ENCODE measurements at regions of chr3 and their contacts with region 1.

Region 1: GRCh38 chr3:102673271-102674115 is 238.7 kb downstream of the ZPLD1 start:
- DNase-seq: peak; percentile 3 to 52 (median 37)
- ATAC-seq: peak; percentile 70
- H3K4me3 ChIP-seq: no peak overlapping the region
- H3K4me3 Mint-ChIP-seq: peak overlapping the region in 1 of 10 donors; percentile 26
- H3K27ac ChIP-seq: no peak overlapping the region
- H3K27ac Mint-ChIP-seq: no peak overlapping the region
- H3K4me1 ChIP-seq: no peaks in the 10 kb centered on the region
- H3K4me1 Mint-ChIP-seq: peaks cover 0 to 4% (median 0%) of the 10 kb centered on the region in 7 donors
- H3K27me3 ChIP-seq: peaks cover 0 to 4% of the 10 kb centered on the region in 2 donors
- H3K27me3 Mint-ChIP-seq: peaks cover 0 to 41% (median 27%) of the 10 kb centered on the region in 5 donors

Region 2: DNA sequence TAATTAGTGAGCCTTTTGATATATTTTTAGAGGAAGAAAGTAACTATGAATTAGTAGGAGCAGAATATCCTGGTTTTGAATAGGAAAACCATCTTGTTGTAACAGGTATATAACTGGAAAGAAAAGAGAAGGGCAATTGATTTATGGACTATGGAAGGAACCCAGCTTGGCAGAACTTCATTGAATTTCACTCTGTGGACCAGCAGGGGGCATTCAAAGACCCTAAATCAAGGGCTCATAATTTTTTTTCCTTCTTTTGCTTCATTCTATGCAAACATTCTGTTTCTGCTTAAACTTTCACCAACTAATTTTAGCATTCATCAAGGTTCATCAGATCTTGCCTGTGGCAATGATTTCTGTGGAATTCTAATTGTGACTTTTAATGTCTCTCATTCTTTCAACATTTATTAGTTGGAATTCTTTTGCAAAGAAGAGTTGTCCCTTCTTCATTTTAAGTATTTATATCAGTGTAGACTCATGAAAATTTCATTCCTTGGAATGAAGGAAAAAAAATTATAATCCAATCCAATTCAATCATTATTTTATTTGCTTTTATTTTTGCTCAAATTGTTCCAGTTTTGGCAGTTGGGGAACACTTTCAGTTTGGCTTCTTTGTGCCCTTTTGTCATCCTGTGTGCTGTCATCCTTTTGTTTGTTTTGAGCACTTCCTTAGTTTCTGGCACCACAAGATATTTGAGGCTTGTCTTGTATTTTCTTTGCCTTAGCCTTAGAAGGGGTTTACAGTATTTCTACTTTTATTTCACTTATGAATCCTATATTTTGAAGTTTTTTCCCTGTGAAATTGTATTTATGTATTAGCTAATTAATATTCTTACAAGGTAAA is 864.1 kb before region 1 on chr3:
- CTCF ChIA-PET with region 1: no interaction called
- POLR2A ChIA-PET with region 1: no interaction called
- intact Hi-C with region 1: loop called in 1 of 2 experiments (anchors 5 kb)
- DNase-seq: peak in 7 of 9 donors; percentile 31 to 67 (median 57)
- ATAC-seq: peak; percentile 88
- H3K4me3 ChIP-seq: no peak overlapping the region
- H3K4me3 Mint-ChIP-seq: peak overlapping the region in 8 of 10 donors; percentile 23 to 66 (median 60)
- H3K27ac ChIP-seq: peak overlapping the region; percentile 34
- H3K27ac Mint-ChIP-seq: peak overlapping the region; percentile 51 to 93 (median 87)
- H3K4me1 ChIP-seq: peaks cover 0 to 27% of the 10 kb centered on the region in 2 donors
- H3K4me1 Mint-ChIP-seq: peaks cover 11 to 62% (median 54%) of the 10 kb centered on the region in 7 donors
- H3K27me3 ChIP-seq: no peaks in the 10 kb centered on the region
- H3K27me3 Mint-ChIP-seq: no peaks in the 10 kb centered on the region

Region 3: GRCh38 chr3:102141096-102141927 is 532.2 kb before region 1 on chr3:
- CTCF ChIA-PET with region 1: no interaction called
- POLR2A ChIA-PET with region 1: no interaction called
- intact Hi-C with region 1: no loop called
- DNase-seq: no peak
- ATAC-seq: no peak
- H3K4me3 ChIP-seq: no peak overlapping the region
- H3K4me3 Mint-ChIP-seq: no peak overlapping the region
- H3K27ac ChIP-seq: no peak overlapping the region
- H3K27ac Mint-ChIP-seq: peak overlapping the region in 1 of 9 donors; percentile 5
- H3K4me1 ChIP-seq: no peaks in the 10 kb centered on the region
- H3K4me1 Mint-ChIP-seq: peaks cover 0 to 19% (median 14%) of the 10 kb centered on the region in 7 donors
- H3K27me3 ChIP-seq: no peaks in the 10 kb centered on the region
- H3K27me3 Mint-ChIP-seq: peaks cover 0 to 21% (median 0%) of the 10 kb centered on the region in 5 donors

Region 4: GRCh38 chr3:102195198-102195948 is 478.1 kb before region 1 on chr3:
- CTCF ChIA-PET with region 1: no interaction called
- POLR2A ChIA-PET with region 1: no interaction called
- intact Hi-C with region 1: no loop called
- DNase-seq: no peak
- ATAC-seq: no peak
- H3K4me3 ChIP-seq: no peak overlapping the region
- H3K4me3 Mint-ChIP-seq: no peak overlapping the region
- H3K27ac ChIP-seq: no peak overlapping the region
- H3K27ac Mint-ChIP-seq: peak overlapping the region in 1 of 9 donors; percentile 1
- H3K4me1 ChIP-seq: no peaks in the 10 kb centered on the region
- H3K4me1 Mint-ChIP-seq: peaks cover 0 to 13% (median 5%) of the 10 kb centered on the region in 7 donors
- H3K27me3 ChIP-seq: no peaks in the 10 kb centered on the region
- H3K27me3 Mint-ChIP-seq: no peaks in the 10 kb centered on the region

Region 5: DNA sequence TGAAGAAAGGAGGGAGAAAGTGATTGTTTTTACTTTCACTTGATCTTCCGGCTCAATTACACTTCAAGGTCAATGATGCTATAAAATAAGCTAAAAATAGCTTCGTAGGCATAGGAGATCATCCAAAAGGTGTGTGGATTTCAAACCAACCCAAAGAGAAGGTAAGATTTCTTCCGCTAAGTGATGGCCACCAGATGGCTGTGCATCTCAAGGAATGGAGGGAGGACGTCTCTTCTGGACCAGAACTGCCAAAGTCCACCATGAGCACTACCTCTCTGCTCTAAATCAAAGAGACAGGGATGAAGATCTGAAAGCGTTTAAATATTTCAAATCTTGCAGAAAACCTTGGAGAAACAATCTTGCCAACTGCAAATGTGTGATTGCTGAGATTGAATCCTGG is 437.8 kb before region 1 on chr3:
- CTCF ChIA-PET with region 1: no interaction called
- POLR2A ChIA-PET with region 1: no interaction called
- intact Hi-C with region 1: loop called in 1 of 2 experiments (anchors 10 kb)
- DNase-seq: peak in 2 of 9 donors; percentile 24 to 25
- ATAC-seq: no peak
- H3K4me3 ChIP-seq: no peak overlapping the region
- H3K4me3 Mint-ChIP-seq: no peak overlapping the region
- H3K27ac ChIP-seq: no peak overlapping the region
- H3K27ac Mint-ChIP-seq: no peak overlapping the region
- H3K4me1 ChIP-seq: no peaks in the 10 kb centered on the region
- H3K4me1 Mint-ChIP-seq: peaks cover 0 to 1% (median 0%) of the 10 kb centered on the region in 7 donors
- H3K27me3 ChIP-seq: no peaks in the 10 kb centered on the region
- H3K27me3 Mint-ChIP-seq: peaks cover 0 to 42% (median 3%) of the 10 kb centered on the region in 5 donors

Region 6: DNA sequence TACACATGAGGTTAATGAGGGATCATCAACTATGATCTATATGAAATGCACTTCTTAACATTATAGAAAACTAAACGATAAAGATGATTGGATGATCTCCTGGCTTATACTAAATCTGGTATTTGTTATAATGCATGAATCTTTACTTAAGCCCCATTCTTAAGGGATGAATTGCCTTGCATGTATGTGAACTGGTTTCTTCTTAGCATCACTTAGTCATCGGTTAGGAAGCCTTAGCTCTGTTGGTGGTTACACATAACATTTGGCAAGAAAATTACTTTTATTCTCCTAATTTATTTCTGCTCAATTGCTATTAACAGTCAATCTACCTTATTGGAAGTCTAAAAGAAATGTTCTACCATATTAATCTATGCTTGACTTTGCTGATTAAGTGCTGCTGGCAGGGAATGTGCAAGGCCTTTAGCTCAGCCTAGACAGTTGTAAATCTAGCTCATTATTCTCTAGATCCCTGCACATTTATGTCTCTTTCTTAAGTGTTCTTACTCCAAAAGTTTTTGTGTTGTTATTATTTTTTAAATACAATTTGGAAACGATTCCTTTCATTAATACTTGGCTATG is 117.3 kb after region 1 on chr3:
- CTCF ChIA-PET with region 1: no interaction called
- POLR2A ChIA-PET with region 1: no interaction called
- intact Hi-C with region 1: no loop called
- DNase-seq: no peak
- ATAC-seq: no peak
- H3K4me3 ChIP-seq: no peak overlapping the region
- H3K4me3 Mint-ChIP-seq: no peak overlapping the region
- H3K27ac ChIP-seq: no peak overlapping the region
- H3K27ac Mint-ChIP-seq: no peak overlapping the region
- H3K4me1 ChIP-seq: no peaks in the 10 kb centered on the region
- H3K4me1 Mint-ChIP-seq: no peaks in the 10 kb centered on the region
- H3K27me3 ChIP-seq: no peaks in the 10 kb centered on the region
- H3K27me3 Mint-ChIP-seq: no peaks in the 10 kb centered on the region

Region 7: DNA sequence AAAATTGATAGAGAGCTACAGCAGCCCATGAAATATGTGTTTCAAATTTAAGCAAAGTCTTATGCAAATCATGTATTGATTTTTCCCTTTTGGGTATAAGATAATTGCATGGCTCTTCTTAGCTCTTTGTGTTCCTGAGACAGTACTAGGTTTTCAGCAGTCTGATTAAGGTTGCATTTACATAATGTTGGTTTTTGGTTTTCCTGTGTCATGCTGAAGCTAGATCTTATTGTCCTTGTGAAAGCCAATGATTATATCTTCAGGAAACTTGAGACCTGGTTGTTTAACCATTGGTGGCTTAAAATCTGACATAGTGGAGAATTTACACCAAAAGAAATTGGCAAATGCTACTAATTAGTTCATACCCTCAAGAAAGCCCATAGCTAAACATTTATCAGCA is 153.9 kb after region 1 on chr3:
- CTCF ChIA-PET with region 1: no interaction called
- POLR2A ChIA-PET with region 1: no interaction called
- intact Hi-C with region 1: no loop called
- DNase-seq: no peak
- ATAC-seq: no peak
- H3K4me3 ChIP-seq: no peak overlapping the region
- H3K4me3 Mint-ChIP-seq: no peak overlapping the region
- H3K27ac ChIP-seq: no peak overlapping the region
- H3K27ac Mint-ChIP-seq: no peak overlapping the region
- H3K4me1 ChIP-seq: no peaks in the 10 kb centered on the region
- H3K4me1 Mint-ChIP-seq: no peaks in the 10 kb centered on the region
- H3K27me3 ChIP-seq: no peaks in the 10 kb centered on the region
- H3K27me3 Mint-ChIP-seq: no peaks in the 10 kb centered on the region